GM10248 (cell line): ENCODE measurements at regions of chr5 and their contacts with region 1.

Region 1: DNA sequence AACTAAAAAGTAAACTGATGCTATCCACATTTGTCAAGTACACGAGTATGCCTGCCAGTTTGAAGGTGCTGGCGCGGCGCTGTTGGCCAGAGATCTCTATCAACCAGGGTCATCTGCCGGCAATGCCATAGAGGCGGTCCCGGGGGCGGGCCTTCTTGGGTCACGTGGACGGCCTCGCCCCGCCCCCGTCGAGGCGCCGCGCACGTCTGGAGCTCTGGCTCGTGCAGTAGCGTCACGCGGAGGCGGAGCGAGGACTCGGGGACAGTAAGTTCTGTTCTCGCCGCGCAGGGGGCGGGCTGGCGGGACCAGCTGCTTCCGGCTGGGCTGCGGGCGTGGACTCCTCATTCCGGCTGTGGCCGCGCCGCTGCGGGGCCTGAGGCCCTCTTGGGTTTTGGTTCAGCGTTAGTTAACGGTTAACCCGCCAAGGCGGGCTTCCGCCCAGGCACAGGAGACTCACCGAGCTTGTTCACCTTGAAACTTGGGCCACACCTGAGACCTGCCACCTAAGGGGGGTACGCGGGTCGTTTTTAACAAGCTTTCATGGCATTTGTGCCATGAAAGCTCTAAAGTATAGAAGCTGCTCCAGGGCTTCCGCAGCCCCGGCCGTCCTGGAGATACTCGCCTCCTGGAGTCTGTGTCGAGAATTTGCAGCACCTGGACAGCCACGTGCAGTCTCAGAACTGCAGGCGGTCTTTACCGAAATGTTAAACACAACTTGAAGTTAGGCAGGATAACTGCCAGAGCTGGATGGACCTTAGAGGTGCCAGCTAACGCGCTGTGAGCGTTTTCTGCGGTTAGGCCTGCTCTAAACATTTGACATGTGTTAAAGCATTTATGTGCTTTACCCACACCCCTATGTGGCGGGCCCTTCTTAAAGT is at the start of gene RFESD:
- DNase-seq: peak; percentile 93
- CTCF ChIP-seq: no peak

Region 2: DNA sequence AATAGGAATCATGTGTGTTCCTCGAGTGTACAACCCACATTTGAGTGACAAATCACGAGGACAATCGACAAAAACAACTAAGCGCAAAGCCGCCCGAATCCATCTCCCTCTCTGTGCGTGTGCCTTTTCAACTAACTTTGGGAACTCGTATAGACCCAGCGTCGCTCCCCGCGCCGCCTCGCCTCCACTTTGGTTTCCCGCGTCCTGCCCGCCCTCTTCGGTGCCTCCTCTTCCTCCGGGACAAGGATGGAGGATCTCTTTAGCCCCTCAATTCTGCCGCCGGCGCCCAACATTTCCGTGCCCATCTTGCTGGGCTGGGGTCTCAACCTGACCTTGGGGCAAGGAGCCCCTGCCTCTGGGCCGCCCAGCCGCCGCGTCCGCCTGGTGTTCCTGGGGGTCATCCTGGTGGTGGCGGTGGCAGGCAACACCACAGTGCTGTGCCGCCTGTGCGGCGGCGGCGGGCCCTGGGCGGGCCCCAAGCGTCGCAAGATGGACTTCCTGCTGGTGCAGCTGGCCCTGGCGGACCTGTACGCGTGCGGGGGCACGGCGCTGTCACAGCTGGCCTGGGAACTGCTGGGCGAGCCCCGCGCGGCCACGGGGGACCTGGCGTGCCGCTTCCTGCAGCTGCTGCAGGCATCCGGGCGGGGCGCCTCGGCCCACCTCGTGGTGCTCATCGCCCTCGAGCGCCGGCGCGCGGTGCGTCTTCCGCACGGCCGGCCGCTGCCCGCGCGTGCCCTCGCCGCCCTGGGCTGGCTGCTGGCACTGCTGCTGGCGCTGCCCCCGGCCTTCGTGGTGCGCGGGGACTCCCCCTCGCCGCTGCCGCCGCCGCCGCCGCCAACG is 26.5 kb before region 1 on chr5 and contains the start of gene GPR150:
- CTCF ChIA-PET with region 1: interaction called, 42 read pairs
- POLR2A ChIA-PET with region 1: no interaction called
- DNase-seq: peak; percentile 76
- CTCF ChIP-seq: no peak

Region 3: GRCh38 chr5:95631991-95632675 is 14.7 kb before region 1 on chr5:
- CTCF ChIA-PET with region 1: interaction called, 15 read pairs
- POLR2A ChIA-PET with region 1: no interaction called
- DNase-seq: no peak
- CTCF ChIP-seq: no peak